ENCODE measurements at regions of chr9 and their contacts with region 1.

Region 1: GRCh38 chr9:113275157-113276131 is at the starts of genes CDC26 and PRPF4:
- DNase-seq: peak; percentile 87 to 99 (median 95)
- ATAC-seq: peak; percentile 89
- H3K4me3 ChIP-seq: peak within 1 kb of the TSS; percentile 78 to 97
- H3K4me3 Mint-ChIP-seq: no peak within 1 kb of the TSS
- H3K27ac ChIP-seq: peak within 1 kb of the TSS; percentile 92 to 97
- H3K27ac Mint-ChIP-seq: no peak within 1 kb of the TSS
- H3K4me1 ChIP-seq: peaks cover 12% of the 10 kb centered on the region
- H3K4me1 Mint-ChIP-seq: peaks cover 46% of the 10 kb centered on the region
- H3K27me3 ChIP-seq: no peaks in the 10 kb centered on the region
- H3K27me3 Mint-ChIP-seq: no peaks in the 10 kb centered on the region
- CTCF ChIP-seq: no peak
- total RNA-seq, gene CDC26: 13.1 TPM
- total RNA-seq, gene PRPF4: 24.4 to 24.8 TPM

Region 2: GRCh38 chr9:112379177-112380101 is 896.0 kb before region 1 on chr9:
- CTCF ChIA-PET with region 1: no interaction called
- POLR2A ChIA-PET with region 1: no interaction called
- intact Hi-C with region 1: loop called in 1 of 2 experiments (anchors 10 kb)
- DNase-seq: peak; percentile 93 to 99 (median 97)
- ATAC-seq: peak; percentile 95
- H3K4me3 ChIP-seq: peak overlapping the region; percentile 81 to 96
- H3K4me3 Mint-ChIP-seq: peak overlapping the region; percentile 99
- H3K27ac ChIP-seq: peak overlapping the region; percentile 77 to 92
- H3K27ac Mint-ChIP-seq: peak overlapping the region; percentile 96
- H3K4me1 ChIP-seq: peaks cover 27% of the 10 kb centered on the region
- H3K4me1 Mint-ChIP-seq: peaks cover 54% of the 10 kb centered on the region
- H3K27me3 ChIP-seq: no peaks in the 10 kb centered on the region
- H3K27me3 Mint-ChIP-seq: no peaks in the 10 kb centered on the region
- CTCF ChIP-seq: no peak

Region 3: GRCh38 chr9:113228130-113228665 is 47.2 kb before region 1 on chr9:
- CTCF ChIA-PET with region 1: interaction called, 10 read pairs
- POLR2A ChIA-PET with region 1: no interaction called
- intact Hi-C with region 1: no loop called
- DNase-seq: peak in 3 of 9 experiments; percentile 8 to 61 (median 57)
- ATAC-seq: peak; percentile 80
- H3K4me3 ChIP-seq: no peak overlapping the region
- H3K4me3 Mint-ChIP-seq: no peak overlapping the region
- H3K27ac ChIP-seq: no peak overlapping the region
- H3K27ac Mint-ChIP-seq: peak overlapping the region; percentile 27
- H3K4me1 ChIP-seq: peaks cover 6% of the 10 kb centered on the region
- H3K4me1 Mint-ChIP-seq: peaks cover 27% of the 10 kb centered on the region
- H3K27me3 ChIP-seq: no peaks in the 10 kb centered on the region
- H3K27me3 Mint-ChIP-seq: no peaks in the 10 kb centered on the region
- CTCF ChIP-seq: no peak

Region 4: DNA sequence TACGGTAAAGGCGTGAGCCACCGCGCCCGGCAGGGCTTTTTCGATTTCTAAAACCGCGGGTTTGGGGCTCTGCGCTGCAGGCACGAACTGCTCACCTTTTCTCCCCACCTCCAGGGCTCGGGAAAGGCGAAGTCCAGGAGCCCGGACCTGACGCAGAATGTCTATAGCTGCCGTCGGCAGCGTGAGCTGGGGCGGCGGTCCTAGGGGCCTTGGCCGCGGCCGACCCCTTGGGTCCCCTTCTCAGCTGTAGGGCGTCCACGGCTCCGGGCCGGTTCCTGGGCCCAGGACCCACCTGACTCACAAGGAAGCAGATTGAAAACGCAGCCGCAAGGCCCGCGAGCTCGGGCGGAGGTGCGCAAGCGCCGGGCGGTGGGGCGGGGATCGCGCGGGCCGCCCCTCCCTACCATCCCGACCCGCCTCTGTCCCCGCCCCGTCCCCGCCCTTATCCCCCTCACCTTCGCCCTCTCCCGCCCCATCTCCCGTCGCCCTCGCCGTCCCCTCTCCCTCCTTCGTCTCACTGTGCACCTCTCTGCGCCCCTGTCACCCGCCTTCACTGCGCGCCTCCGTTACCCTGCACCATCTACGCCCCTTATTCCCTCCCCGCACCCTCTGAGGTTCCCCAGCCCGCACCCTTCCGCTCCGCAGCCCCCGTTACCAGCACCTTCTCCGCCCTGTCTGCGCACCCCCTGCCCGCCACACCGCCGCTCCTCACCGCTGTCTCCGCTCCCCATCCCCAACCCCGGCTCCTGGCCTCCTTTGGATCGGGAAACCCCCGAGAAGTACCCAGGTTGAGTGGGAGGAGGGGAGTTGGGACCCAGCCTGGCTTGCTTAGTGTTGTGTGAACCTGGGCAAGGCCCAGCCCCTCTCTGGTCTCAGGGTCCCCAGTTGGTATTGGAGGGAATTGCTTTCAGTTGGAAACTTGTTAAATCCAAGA is 101.5 kb after region 1 on chr9 and contains the start of gene HDHD3:
- CTCF ChIA-PET with region 1: no interaction called
- POLR2A ChIA-PET with region 1: no interaction called
- intact Hi-C with region 1: loop called in 1 of 2 experiments (anchors 1 kb)
- DNase-seq: peak; percentile 40 to 91 (median 76)
- ATAC-seq: peak; percentile 90
- H3K4me3 ChIP-seq: peak within 1 kb of the TSS; percentile 88 to 94
- H3K4me3 Mint-ChIP-seq: peak within 1 kb of the TSS; percentile 86
- H3K27ac ChIP-seq: peak within 1 kb of the TSS; percentile 69
- H3K27ac Mint-ChIP-seq: peak within 1 kb of the TSS; percentile 84
- H3K4me1 ChIP-seq: peaks cover 8% of the 10 kb centered on the region
- H3K4me1 Mint-ChIP-seq: peaks cover 13% of the 10 kb centered on the region
- H3K27me3 ChIP-seq: no peaks in the 10 kb centered on the region
- H3K27me3 Mint-ChIP-seq: no peaks in the 10 kb centered on the region
- CTCF ChIP-seq: no peak
- total RNA-seq, gene HDHD3: 10.2 to 11.0 TPM

Region 5: GRCh38 chr9:113446323-113446740 is 170.9 kb after region 1 on chr9:
- CTCF ChIA-PET with region 1: interaction called, 16 read pairs
- POLR2A ChIA-PET with region 1: no interaction called
- intact Hi-C with region 1: no loop called
- DNase-seq: peak in 2 of 9 experiments; percentile 56 to 66
- ATAC-seq: peak; percentile 34
- H3K4me3 ChIP-seq: no peak overlapping the region
- H3K4me3 Mint-ChIP-seq: no peak overlapping the region
- H3K27ac ChIP-seq: no peak overlapping the region
- H3K27ac Mint-ChIP-seq: no peak overlapping the region
- H3K4me1 ChIP-seq: no peaks in the 10 kb centered on the region
- H3K4me1 Mint-ChIP-seq: peaks cover 2% of the 10 kb centered on the region
- H3K27me3 ChIP-seq: no peaks in the 10 kb centered on the region
- H3K27me3 Mint-ChIP-seq: no peaks in the 10 kb centered on the region
- CTCF ChIP-seq: peak; percentile 92

Region 6: GRCh38 chr9:113578882-113579282 is 303.4 kb after region 1 on chr9:
- CTCF ChIA-PET with region 1: interaction called, 12 read pairs
- POLR2A ChIA-PET with region 1: no interaction called
- intact Hi-C with region 1: loop called (anchors 1 to 2 kb)
- DNase-seq: peak; percentile 50 to 92 (median 87)
- ATAC-seq: peak; percentile 56
- H3K4me3 ChIP-seq: peak overlapping the region; percentile 15 to 24
- H3K4me3 Mint-ChIP-seq: peak overlapping the region; percentile 79
- H3K27ac ChIP-seq: peak overlapping the region; percentile 37 to 76
- H3K27ac Mint-ChIP-seq: peak overlapping the region; percentile 94
- H3K4me1 ChIP-seq: peaks cover 57% of the 10 kb centered on the region
- H3K4me1 Mint-ChIP-seq: peaks cover 81% of the 10 kb centered on the region
- H3K27me3 ChIP-seq: no peaks in the 10 kb centered on the region
- H3K27me3 Mint-ChIP-seq: no peaks in the 10 kb centered on the region
- CTCF ChIP-seq: no peak

Measured in CD8-positive, alpha-beta T cell (primary cell).